PC-9 (cell line): ENCODE measurements at regions of chr7 and their contacts with region 1.

Region 1: DNA sequence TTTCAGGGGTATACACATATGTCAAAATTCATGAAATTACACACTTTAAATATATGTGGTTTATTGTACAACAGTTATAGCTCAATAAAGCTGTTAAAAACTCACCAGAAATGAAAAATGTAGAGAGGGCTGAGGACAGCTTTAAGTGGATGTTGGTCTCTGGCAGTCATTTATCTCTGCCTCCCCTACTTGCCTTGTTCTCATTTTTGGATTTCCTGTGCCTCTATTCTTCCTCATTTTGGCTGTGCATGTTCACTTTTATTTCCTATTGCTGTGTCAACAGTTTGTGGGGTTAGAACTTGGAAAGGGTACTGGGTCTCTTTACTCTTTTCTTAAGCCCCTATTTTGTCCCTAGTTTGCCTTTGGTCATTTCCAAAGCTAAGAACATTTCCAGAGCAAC is 18.6 kb upstream of the MEST start:
- DNase-seq: no peak
- H3K4me3 ChIP-seq: no peak overlapping the region
- H3K27ac ChIP-seq: no peak overlapping the region
- H3K4me1 ChIP-seq: no peaks in the 10 kb centered on the region
- H3K27me3 ChIP-seq: no peaks in the 10 kb centered on the region
- CTCF ChIP-seq: no peak

Region 2: GRCh38 chr7:130413201-130413731 is 60.0 kb before region 1 on chr7:
- CTCF ChIA-PET with region 1: no interaction called
- POLR2A ChIA-PET with region 1: interaction called, 12 read pairs
- intact Hi-C with region 1: no loop called
- DNase-seq: no peak
- H3K4me3 ChIP-seq: no peak overlapping the region
- H3K27ac ChIP-seq: no peak overlapping the region
- H3K4me1 ChIP-seq: peaks cover 7% of the 10 kb centered on the region; the same call in 1 of the 2 replicates
- H3K27me3 ChIP-seq: no peaks in the 10 kb centered on the region
- CTCF ChIP-seq: no peak